GM12878 (cell line): ENCODE measurements at regions of chr6 and their contacts with region 1.

Region 1: DNA sequence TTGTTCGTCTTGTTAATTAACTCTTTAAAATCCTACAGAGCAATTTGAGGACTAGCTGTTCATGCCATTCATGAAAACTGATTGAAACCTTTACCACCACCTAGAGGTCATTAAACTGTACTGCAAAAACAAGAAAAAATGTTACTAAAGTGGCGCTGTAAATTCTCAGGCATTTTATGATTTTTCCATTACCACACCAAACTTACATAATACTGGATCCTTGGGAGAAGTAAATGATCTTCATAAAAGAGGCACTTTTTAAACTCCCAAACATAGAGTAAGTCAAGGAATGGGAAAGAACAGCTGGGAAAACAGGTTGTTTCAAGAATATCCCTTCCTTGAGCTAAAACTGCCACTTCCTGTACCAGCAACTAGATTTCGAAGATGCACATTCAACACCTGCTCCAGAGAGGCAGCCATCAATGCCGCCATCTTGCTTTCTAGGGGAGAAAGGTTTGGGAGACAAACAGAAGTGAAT is 54.3 kb downstream of the MYLIP start:
- DNase-seq: peak; percentile 35
- ATAC-seq: peak; percentile 65
- H3K4me3 ChIP-seq: no peak overlapping the region
- H3K27ac ChIP-seq: no peak overlapping the region
- H3K4me1 ChIP-seq: no peaks in the 10 kb centered on the region
- H3K27me3 ChIP-seq: no peaks in the 10 kb centered on the region; a peak in 1 of 4 replicates
- CTCF ChIP-seq: peak; percentile 61 to 79 (median 63)
- EP300 ChIP-seq: no peak
- POLR2A ChIP-seq: no peak
- RAD21 ChIP-seq: peak; percentile 78

Region 2: GRCh38 chr6:15595461-15596173 is 587.6 kb before region 1 on chr6:
- CTCF ChIA-PET with region 1: no interaction called
- POLR2A ChIA-PET with region 1: no interaction called
- RAD21 ChIA-PET with region 1: no interaction called
- SMC1A ChIA-PET with region 1: no interaction called
- in situ Hi-C with region 1: no loop called
- intact Hi-C with region 1: no loop called
- DNase-seq: no peak
- ATAC-seq: no peak
- H3K4me3 ChIP-seq: no peak overlapping the region
- H3K27ac ChIP-seq: no peak overlapping the region
- H3K4me1 ChIP-seq: no peaks in the 10 kb centered on the region
- H3K27me3 ChIP-seq: no peaks in the 10 kb centered on the region
- CTCF ChIP-seq: no peak
- EP300 ChIP-seq: no peak
- POLR2A ChIP-seq: no peak
- RAD21 ChIP-seq: no peak

Region 3: GRCh38 chr6:15626878-15627674 is 556.1 kb before region 1 on chr6:
- CTCF ChIA-PET with region 1: interaction called, 17 read pairs
- POLR2A ChIA-PET with region 1: no interaction called
- RAD21 ChIA-PET with region 1: interaction called, 9 read pairs
- SMC1A ChIA-PET with region 1: interaction called, 14 read pairs
- in situ Hi-C with region 1: no loop called
- intact Hi-C with region 1: no loop called
- DNase-seq: no peak
- ATAC-seq: no peak
- H3K4me3 ChIP-seq: no peak overlapping the region
- H3K27ac ChIP-seq: no peak overlapping the region
- H3K4me1 ChIP-seq: peaks cover 1% of the 10 kb centered on the region; the same call in 1 of the 2 replicates
- H3K27me3 ChIP-seq: no peaks in the 10 kb centered on the region
- CTCF ChIP-seq: no peak
- EP300 ChIP-seq: no peak
- POLR2A ChIP-seq: no peak
- RAD21 ChIP-seq: no peak

Region 4: DNA sequence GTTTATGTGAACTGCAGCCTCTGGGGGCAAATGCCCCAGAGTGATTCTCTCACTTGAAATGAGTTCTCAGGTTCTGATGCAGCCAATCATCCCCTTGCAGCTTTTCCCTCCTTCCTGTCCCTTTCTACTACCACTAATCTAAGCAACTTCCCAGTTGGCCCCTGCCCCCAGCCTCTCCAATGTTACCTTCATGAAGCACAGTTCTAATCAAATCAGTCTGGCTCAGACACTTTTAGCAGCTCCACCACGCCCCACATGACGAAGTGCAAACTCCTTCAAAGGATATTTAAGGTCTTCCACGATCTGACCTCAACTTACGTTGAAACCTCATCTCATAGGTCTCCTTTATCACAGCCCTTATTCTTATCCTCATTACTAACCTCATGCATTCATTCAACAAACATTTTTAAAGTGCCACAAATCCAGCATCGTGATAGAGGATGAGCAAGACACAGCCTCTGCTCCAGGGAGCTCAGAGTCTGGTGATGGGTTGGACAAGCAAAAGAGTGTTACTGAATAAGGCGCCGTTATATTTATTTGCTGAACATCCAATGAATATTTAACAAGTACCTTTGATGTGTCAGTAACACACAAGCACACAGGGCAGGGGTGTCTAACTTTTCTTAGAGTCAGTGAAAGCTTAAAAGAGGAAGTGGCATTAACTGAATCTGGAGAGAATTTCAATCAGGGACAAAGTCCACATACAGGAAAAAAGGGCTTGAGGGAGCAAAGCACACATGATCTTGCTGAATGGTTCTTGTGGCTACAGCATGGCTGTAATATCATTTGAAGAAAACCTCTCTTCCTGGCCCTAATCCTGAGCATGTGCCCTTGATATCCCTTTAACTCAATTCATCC is 500.0 kb before region 1 on chr6:
- CTCF ChIA-PET with region 1: interaction called, 17 read pairs
- POLR2A ChIA-PET with region 1: interaction called, 4 read pairs
- RAD21 ChIA-PET with region 1: interaction called, 8 read pairs
- SMC1A ChIA-PET with region 1: interaction called, 16 read pairs
- in situ Hi-C with region 1: no loop called
- intact Hi-C with region 1: no loop called
- DNase-seq: peak; percentile 40
- ATAC-seq: peak; percentile 93
- H3K4me3 ChIP-seq: no peak overlapping the region
- H3K27ac ChIP-seq: no peak overlapping the region
- H3K4me1 ChIP-seq: 0 out of 2 replicates have a peak, but pooled peaks cover 3% of the 10 kb centered on the region
- H3K27me3 ChIP-seq: 0 out of 4 replicates have a peak, but pooled peaks cover 0 to 3% of the 10 kb centered on the region in 2 experiments
- CTCF ChIP-seq: no peak
- EP300 ChIP-seq: peak; percentile 57 to 68; a peak in 3 of 4 replicates
- POLR2A ChIP-seq: no peak
- RAD21 ChIP-seq: no peak

Region 5: GRCh38 chr6:15776458-15776980 is 406.7 kb before region 1 on chr6:
- CTCF ChIA-PET with region 1: interaction called, 5 read pairs
- POLR2A ChIA-PET with region 1: no interaction called
- RAD21 ChIA-PET with region 1: interaction called, 8 read pairs
- SMC1A ChIA-PET with region 1: interaction called, 13 read pairs
- in situ Hi-C with region 1: no loop called
- intact Hi-C with region 1: no loop called
- DNase-seq: peak; percentile 55
- ATAC-seq: peak; percentile 89
- H3K4me3 ChIP-seq: no peak overlapping the region
- H3K27ac ChIP-seq: no peak overlapping the region
- H3K4me1 ChIP-seq: peaks cover 7% of the 10 kb centered on the region
- H3K27me3 ChIP-seq: no peaks in the 10 kb centered on the region
- CTCF ChIP-seq: no peak
- EP300 ChIP-seq: peak; percentile 85 to 89; a peak in 2 of 4 replicates
- POLR2A ChIP-seq: no peak
- RAD21 ChIP-seq: 0 out of 2 replicates have a peak, but pooled peaks have one; percentile 16

Region 6: DNA sequence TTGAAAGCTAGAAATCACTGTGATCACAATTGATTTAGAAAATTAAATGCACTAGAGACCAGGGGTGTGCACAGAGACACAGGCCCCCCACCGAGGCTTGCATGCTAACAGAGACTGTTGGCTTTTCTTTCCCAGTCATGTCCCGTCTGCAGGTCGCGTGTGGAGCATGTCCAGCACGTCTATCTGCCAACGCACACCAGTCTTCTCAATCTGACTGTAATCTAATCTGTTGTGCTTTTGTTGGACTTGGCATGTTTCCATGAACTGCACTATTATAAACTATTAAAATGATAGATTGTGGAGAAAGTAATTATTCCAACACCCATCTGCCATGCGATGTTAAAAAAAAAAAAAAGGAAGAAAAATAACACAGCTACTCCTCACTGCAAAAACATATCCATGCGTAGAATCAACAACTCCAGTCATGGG is 36.7 kb before region 1 on chr6:
- CTCF ChIA-PET with region 1: interaction called, 19 read pairs
- POLR2A ChIA-PET with region 1: no interaction called
- RAD21 ChIA-PET with region 1: interaction called, 4 read pairs
- SMC1A ChIA-PET with region 1: interaction called, 8 read pairs
- in situ Hi-C with region 1: no loop called
- intact Hi-C with region 1: no loop called
- DNase-seq: no peak
- ATAC-seq: no peak
- H3K4me3 ChIP-seq: no peak overlapping the region
- H3K27ac ChIP-seq: no peak overlapping the region
- H3K4me1 ChIP-seq: no peaks in the 10 kb centered on the region
- H3K27me3 ChIP-seq: no peaks in the 10 kb centered on the region
- CTCF ChIP-seq: no peak
- EP300 ChIP-seq: no peak
- POLR2A ChIP-seq: no peak
- RAD21 ChIP-seq: no peak

Region 7: DNA sequence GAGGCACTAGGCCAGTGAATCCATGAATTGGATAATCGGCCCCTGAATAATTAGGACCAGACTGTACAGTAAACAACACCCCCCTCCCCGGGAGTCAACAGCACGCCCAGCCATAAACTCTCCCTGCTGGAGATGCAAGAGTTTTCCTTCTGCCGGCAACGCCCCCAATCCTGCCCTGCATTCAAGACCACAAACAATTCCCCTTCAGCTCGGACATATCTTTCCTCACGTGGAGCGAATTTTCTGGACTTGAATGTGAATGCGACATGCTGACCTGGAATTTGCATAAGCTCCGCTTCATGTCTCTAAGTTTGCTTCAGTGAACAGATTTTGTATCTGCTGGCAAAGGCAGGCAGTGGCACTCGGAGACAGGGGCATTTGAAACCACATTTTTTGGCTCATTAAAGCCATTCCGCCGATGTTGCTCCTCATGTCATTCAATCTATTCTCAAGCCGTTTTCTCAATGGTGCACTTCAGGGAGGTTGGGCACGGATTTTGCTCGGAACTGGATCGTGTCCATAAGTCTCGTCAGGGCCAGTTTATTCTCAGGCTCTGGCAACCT is 17.2 kb after region 1 on chr6:
- CTCF ChIA-PET with region 1: interaction called, 130 read pairs
- POLR2A ChIA-PET with region 1: interaction called, 4 read pairs
- RAD21 ChIA-PET with region 1: interaction called, 63 read pairs
- SMC1A ChIA-PET with region 1: interaction called, 46 read pairs
- in situ Hi-C with region 1: no loop called
- intact Hi-C with region 1: loop called (anchors 2 kb)
- DNase-seq: no peak
- ATAC-seq: no peak
- H3K4me3 ChIP-seq: no peak overlapping the region
- H3K27ac ChIP-seq: no peak overlapping the region
- H3K4me1 ChIP-seq: peaks cover 4% of the 10 kb centered on the region
- H3K27me3 ChIP-seq: no peaks in the 10 kb centered on the region
- CTCF ChIP-seq: no peak
- EP300 ChIP-seq: no peak
- POLR2A ChIP-seq: no peak
- RAD21 ChIP-seq: no peak